Calu3 (cell line): ENCODE measurements at regions of chr1 and their contacts with region 1.

Region 1: DNA sequence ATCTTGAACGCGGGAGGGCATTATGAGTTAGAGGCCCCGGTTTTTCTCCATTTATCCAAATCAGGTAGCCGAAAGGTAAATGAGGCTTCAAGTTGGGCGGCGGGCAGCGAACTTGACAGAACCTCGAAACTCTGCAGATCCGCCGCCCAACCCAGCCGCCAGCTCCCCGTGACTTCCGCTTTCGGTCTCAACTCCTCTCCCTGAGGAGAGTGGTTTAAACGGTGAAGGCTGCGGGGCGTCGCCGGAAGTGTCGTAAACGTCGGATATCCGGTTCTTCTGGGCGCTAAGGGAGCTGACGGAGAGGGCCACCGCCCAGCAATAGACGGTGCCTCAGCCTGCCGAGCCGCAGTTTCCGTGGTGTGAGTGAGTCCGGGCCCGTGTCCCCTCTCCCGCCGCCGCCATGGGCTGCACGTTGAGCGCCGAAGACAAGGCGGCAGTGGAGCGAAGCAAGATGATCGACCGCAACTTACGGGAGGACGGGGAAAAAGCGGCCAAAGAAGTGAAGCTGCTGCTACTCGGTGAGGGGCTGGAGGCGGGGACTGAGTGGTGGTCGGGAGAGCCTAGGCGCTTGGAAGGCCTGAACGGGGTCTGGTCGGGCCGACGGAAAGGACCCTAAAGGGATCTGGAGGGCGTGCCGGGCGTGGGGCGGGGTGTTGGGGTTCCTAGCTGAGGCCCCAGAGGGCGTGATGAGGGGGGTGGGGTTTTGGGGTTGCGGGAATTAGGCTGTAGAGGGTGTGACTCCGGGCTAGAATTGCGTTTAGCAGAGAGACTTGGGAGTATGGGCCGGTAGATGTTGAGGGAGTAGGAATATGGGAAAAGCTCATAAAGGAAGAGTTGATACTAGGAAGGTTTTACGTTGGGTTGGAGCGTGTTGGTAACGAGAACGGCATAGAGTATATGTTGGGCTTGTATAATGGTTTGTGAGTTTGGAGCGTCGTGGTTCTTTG is at the start of gene GNAI3:
- DNase-seq: peak; percentile 87
- H3K4me3 Mint-ChIP-seq: peak within 1 kb of the TSS; percentile 91
- H3K27ac Mint-ChIP-seq: peak within 1 kb of the TSS; percentile 97
- H3K4me1 Mint-ChIP-seq: no peaks in the 10 kb centered on the region
- H3K27me3 Mint-ChIP-seq: peaks cover 14% of the 10 kb centered on the region
- CTCF ChIP-seq: no peak
- total RNA-seq, gene GNAI3: 6.3 and 6.5 TPM in 2 replicates

Region 2: GRCh38 chr1:109619576-109620433 is 71.2 kb after region 1 on chr1 and contains the starts of genes AMPD2 and GNAT2:
- CTCF ChIA-PET with region 1: interaction called, 9 read pairs
- intact Hi-C with region 1: loop called (anchors 5 kb)
- DNase-seq: peak; percentile 78
- H3K4me3 Mint-ChIP-seq: peak within 1 kb of the TSS; percentile 93
- H3K27ac Mint-ChIP-seq: peak within 1 kb of the TSS; percentile 94
- H3K4me1 Mint-ChIP-seq: peaks cover 35% of the 10 kb centered on the region
- H3K27me3 Mint-ChIP-seq: no peaks in the 10 kb centered on the region
- CTCF ChIP-seq: no peak
- total RNA-seq, gene AMPD2: 34.0 and 54.6 TPM in 2 replicates
- total RNA-seq, gene GNAT2: not detected in 2 replicates

Region 3: GRCh38 chr1:109630081-109630897 is 81.7 kb after region 1 on chr1:
- CTCF ChIA-PET with region 1: interaction called, 17 read pairs
- intact Hi-C with region 1: no loop called
- DNase-seq: no peak
- H3K4me3 Mint-ChIP-seq: no peak overlapping the region
- H3K27ac Mint-ChIP-seq: no peak overlapping the region
- H3K4me1 Mint-ChIP-seq: peaks cover 7% of the 10 kb centered on the region
- H3K27me3 Mint-ChIP-seq: no peaks in the 10 kb centered on the region
- CTCF ChIP-seq: peak; percentile 41

Region 4: DNA sequence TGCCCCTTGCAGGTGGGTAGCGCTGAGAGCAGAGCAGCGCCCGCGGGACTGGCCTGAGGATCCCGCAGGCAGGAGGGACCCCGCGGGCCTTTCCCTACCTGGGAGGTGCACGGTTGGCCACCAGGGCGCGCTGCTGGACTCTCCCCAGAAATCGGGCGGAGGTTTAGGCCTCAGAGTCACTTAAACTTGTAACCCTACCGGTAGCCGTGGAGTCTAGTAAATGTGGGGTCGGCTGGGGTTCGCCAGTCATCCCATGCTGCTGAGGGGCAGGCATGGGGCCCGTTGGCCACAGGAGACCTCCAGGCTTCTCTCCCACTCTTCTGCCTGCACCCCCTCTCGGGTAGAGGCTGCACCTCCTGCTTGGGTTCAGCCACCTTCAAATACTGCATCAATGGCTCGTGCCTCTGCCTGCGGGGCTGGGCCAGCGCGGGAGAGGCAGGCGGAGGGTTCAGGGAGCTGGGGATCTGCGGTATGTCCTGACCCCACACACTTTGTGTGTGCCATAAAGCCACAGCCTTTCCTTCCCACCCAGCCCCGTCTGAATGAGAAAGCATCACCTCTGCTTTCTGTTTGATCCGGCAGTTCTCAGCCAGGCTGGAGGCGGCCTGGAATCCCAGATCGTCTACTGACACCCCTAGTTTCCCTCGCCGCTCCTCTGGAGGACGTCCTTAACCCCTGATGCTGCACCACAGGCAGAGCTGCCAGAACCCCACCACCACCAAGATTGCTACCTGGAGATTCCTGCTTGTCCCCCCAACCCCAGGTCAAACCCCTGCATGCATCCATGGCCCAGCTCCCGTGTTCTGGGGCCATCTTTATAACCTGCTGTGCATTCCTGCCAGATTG is 95.0 kb after region 1 on chr1:
- CTCF ChIA-PET with region 1: interaction called, 26 read pairs
- intact Hi-C with region 1: loop called (anchors 5 kb)
- DNase-seq: peak; percentile 88
- H3K4me3 Mint-ChIP-seq: no peak overlapping the region
- H3K27ac Mint-ChIP-seq: no peak overlapping the region
- H3K4me1 Mint-ChIP-seq: peaks cover 16% of the 10 kb centered on the region
- H3K27me3 Mint-ChIP-seq: no peaks in the 10 kb centered on the region
- CTCF ChIP-seq: peak; percentile 64

Region 5: GRCh38 chr1:109704173-109704572 is 155.6 kb after region 1 on chr1:
- CTCF ChIA-PET with region 1: no interaction called
- intact Hi-C with region 1: loop called (anchors 5 kb)
- DNase-seq: no peak
- H3K4me3 Mint-ChIP-seq: no peak overlapping the region
- H3K27ac Mint-ChIP-seq: no peak overlapping the region
- H3K4me1 Mint-ChIP-seq: peaks cover 20% of the 10 kb centered on the region
- H3K27me3 Mint-ChIP-seq: peaks cover 13% of the 10 kb centered on the region
- CTCF ChIP-seq: no peak

Region 6: GRCh38 chr1:109732390-109732881 is 183.8 kb after region 1 on chr1:
- CTCF ChIA-PET with region 1: no interaction called
- intact Hi-C with region 1: no loop called
- DNase-seq: no peak
- H3K4me3 Mint-ChIP-seq: peak overlapping the region; percentile 54
- H3K27ac Mint-ChIP-seq: peak overlapping the region; percentile 83
- H3K4me1 Mint-ChIP-seq: peaks cover 32% of the 10 kb centered on the region
- H3K27me3 Mint-ChIP-seq: no peaks in the 10 kb centered on the region
- CTCF ChIP-seq: no peak

Region 7: DNA sequence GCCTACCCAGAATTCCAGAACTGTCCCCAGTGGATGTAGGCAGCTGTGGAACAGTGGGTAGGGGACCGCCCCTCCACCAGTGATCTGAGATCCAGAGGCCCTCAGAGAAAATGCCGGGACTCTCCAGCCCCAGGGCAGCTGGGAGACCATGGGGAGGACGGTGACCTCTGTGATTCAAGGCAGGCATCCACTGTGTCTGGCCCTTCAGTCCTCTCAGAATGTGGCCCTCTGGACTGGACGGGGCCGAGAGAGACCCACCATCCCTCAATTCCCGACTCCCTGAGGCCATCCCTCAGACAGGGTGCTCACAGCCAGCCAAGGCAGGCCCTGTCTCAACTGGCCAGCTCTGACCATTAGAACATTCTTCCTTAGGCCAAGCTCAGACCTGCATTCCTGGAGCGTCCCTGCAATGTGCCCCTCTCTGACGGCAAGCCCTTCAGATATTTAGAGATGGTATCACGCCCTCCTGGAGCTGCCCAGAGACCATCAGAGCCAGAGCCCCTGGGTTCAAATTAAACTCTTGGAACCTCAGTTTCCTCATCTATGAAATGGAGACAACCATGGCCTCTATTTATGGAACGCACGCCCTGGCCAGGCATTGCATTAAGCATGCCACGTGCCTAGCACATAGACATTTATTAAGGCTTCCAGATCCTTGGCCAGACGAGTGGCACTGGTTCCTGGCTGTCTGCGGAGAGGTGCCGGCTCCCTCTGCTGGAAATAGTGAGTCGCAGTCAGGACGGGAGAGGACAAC is 224.7 kb after region 1 on chr1:
- CTCF ChIA-PET with region 1: no interaction called
- intact Hi-C with region 1: loop called (anchors 2 kb)
- DNase-seq: peak; percentile 72
- H3K4me3 Mint-ChIP-seq: no peak overlapping the region
- H3K27ac Mint-ChIP-seq: no peak overlapping the region
- H3K4me1 Mint-ChIP-seq: no peaks in the 10 kb centered on the region
- H3K27me3 Mint-ChIP-seq: peaks cover 14% of the 10 kb centered on the region
- CTCF ChIP-seq: peak; percentile 52

Region 8: DNA sequence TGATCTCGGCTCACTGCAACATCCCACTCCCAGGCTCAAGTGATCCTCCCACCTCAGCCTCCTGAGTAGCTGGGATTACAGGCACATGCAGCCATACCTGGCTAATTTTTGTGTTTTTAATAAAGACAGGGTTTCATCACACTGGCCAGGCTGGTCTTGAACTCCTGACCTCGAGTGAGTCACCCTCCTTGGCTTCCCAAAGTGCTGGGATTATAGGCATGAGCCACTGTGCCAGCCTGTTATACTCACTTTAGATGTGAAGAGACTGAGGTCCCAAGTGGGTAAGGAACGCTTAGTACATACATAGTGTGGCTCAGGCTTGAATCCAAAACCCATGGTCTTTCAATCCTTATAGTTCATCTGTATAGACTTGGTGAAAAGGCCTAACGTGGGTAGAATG is 278.9 kb after region 1 on chr1:
- CTCF ChIA-PET with region 1: no interaction called
- intact Hi-C with region 1: no loop called
- DNase-seq: peak; percentile 22
- H3K4me3 Mint-ChIP-seq: no peak overlapping the region
- H3K27ac Mint-ChIP-seq: no peak overlapping the region
- H3K4me1 Mint-ChIP-seq: peaks cover 23% of the 10 kb centered on the region
- H3K27me3 Mint-ChIP-seq: no peaks in the 10 kb centered on the region
- CTCF ChIP-seq: no peak